CD4-positive, alpha-beta memory T cell (primary cell): ENCODE measurements at regions of chr5 and their contacts with region 1.

Region 1: DNA sequence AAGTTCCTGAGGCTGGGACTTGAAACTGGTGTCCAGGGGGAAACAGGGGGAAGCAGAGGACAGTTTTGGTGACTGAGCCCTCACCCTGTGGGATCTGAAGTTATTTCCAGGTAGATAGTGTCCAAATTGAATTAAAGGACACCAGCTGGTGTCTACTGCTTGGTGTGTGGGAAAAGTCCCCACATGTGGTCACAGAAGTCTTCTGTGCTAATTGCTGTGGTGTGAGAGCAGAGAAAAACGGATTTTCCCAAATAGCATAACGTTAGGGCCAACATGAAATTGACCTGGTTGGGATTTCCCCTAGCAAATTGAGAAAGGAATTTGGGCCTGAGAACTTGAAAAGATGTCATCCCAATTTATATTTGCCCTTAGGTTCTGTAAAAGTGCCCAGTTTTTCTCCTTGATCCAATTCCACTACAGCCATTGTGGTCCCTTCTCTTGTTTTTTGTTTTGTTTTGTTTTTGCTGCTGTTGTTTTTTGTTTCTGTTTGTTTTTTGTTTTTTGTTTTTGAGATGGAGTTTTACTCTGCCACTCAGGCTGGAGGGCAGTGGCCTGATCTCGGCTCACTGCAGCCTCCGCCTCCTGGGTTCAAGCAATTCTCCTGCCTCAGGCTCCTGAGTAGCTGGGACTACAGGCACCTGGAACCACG is 5.6 kb upstream of the STARD4 start:
- DNase-seq: no peak
- H3K4me3 ChIP-seq: no peak overlapping the region
- H3K4me3 Mint-ChIP-seq: no peak overlapping the region
- H3K27ac ChIP-seq: no peak overlapping the region
- H3K27ac Mint-ChIP-seq: no peak overlapping the region
- H3K4me1 ChIP-seq: peaks cover 4% of the 10 kb centered on the region
- H3K4me1 Mint-ChIP-seq: peaks cover 3% of the 10 kb centered on the region in 4 donors
- H3K27me3 ChIP-seq: no peaks in the 10 kb centered on the region
- H3K27me3 Mint-ChIP-seq: no peaks in the 10 kb centered on the region

Region 2: DNA sequence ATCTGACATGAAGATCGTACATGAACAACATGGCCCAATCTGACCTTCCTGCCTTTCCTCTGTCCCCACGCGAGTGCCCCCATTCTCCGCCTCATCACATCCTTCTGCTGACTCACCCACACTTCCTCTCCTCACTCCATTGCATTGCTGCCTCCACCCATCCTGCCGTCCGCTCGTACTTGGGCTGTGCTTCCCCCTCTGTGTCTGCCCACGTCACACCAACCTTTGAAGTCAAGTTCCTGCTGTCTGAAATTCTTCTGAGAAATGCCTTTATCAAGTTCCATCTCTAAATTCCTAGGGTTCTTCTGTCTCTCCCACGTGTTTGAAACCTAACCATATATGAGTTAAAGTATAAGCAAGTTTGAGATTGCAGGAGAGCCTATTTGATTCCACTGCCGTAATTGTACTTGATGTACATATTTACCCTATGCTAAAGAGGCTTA is 12.3 kb after region 1 on chr5:
- CTCF ChIA-PET with region 1: interaction called, 12 read pairs
- POLR2A ChIA-PET with region 1: interaction called, 16 read pairs
- intact Hi-C with region 1: no loop called
- DNase-seq: peak; percentile 84 to 98 (median 87)
- H3K4me3 ChIP-seq: peak overlapping the region in 1 of 2 donors; percentile 3
- H3K4me3 Mint-ChIP-seq: peak overlapping the region; percentile 31 to 79 (median 66)
- H3K27ac ChIP-seq: peak overlapping the region; percentile 68
- H3K27ac Mint-ChIP-seq: peak overlapping the region; percentile 76 to 98 (median 89)
- H3K4me1 ChIP-seq: peaks cover 18% of the 10 kb centered on the region
- H3K4me1 Mint-ChIP-seq: peaks cover 13 to 17% (median 15%) of the 10 kb centered on the region in 4 donors
- H3K27me3 ChIP-seq: no peaks in the 10 kb centered on the region
- H3K27me3 Mint-ChIP-seq: peaks cover 0 to 1% of the 10 kb centered on the region in 2 donors